Astrocyte of the cerebellum (primary cell): ENCODE measurements at regions of chr10 and their contacts with region 1.

Region 1: GRCh38 chr10:63206997-63207811 is 74.1 kb downstream of the NRBF2 start:
- DNase-seq: peak; percentile 83
- H3K4me3 ChIP-seq: no peak overlapping the region
- CTCF ChIP-seq: no peak

Region 2: DNA sequence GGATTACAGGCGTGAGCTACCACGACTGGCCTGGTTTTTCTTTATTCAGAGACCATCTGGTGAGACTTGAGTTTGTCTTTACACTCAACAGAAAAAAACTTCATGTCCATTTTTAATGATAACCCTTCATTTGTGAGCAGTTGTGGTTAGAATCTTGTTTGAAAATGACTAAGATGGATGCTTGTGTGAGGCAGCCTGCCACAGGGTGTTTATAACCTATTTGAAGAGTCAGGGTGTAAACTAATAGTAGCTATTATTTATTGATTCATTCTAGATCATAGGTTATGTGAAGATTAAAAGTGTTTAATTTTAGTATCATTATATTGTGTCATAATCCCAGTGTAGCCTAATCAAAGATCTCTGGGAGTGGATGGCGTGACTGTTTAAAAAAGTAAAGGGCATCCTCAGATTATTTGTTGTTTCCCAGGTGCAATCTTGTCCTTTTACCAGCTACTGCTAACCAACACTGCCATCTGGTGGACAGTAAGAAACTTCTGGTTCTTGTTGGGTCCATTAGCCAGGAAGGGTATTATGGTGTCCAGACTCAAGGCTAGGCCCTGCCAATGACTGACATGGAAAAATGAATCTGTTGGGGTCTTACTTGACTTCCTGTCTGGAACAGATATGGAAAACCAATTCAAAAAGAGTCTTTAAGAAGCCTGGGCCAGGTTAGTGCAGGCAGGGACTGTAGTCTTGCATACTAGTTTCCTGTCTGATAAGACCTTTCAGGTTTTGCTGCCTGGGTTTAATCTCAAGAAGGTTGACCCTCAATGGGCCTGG is 49.2 kb before region 1 on chr10:
- in situ Hi-C with region 1: no loop called
- DNase-seq: peak; percentile 91
- H3K4me3 ChIP-seq: no peak overlapping the region
- CTCF ChIP-seq: peak; percentile 77

Region 3: DNA sequence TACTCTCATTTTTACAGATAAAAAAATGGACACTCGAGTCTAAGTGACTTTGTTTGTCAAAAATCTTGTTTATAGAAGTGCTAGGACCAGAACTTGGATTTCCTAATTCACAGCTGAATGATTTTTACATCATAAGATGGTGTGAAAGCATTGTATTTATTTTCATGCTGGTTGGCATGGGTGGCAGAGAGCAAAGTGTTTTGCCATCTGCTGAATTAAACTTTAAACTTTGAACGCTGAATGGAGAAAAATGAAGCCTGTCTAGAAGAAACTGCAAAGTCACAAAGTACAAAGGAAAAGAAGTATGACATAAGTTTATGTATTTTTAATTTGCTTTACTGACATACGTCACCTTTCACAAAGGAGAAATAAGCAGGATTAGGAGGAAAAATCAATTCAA is 67.9 kb after region 1 on chr10:
- in situ Hi-C with region 1: loop called (anchors 5 kb)
- DNase-seq: no peak
- H3K4me3 ChIP-seq: no peak overlapping the region
- CTCF ChIP-seq: no peak

Region 4: DNA sequence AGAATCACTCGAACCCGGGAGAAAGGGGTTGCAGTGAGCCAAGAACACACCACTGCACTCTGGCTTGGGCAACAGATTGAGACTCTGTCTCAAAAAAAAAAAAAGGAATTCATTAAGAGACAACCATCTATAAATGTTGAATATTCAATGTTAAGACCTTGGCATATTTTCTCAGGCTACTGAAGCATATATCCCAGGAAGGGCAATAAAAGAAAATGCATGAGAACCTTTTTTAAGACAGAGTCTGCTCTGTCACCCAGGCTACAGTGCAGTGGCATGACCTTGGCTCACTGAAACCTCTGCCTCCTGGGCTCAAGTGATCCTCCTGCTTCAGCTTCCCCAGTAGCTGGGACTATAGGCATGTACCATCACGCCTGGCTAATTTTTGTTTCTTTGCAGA is 93.6 kb after region 1 on chr10:
- in situ Hi-C with region 1: no loop called
- DNase-seq: no peak
- H3K4me3 ChIP-seq: no peak overlapping the region
- CTCF ChIP-seq: no peak

Region 5: DNA sequence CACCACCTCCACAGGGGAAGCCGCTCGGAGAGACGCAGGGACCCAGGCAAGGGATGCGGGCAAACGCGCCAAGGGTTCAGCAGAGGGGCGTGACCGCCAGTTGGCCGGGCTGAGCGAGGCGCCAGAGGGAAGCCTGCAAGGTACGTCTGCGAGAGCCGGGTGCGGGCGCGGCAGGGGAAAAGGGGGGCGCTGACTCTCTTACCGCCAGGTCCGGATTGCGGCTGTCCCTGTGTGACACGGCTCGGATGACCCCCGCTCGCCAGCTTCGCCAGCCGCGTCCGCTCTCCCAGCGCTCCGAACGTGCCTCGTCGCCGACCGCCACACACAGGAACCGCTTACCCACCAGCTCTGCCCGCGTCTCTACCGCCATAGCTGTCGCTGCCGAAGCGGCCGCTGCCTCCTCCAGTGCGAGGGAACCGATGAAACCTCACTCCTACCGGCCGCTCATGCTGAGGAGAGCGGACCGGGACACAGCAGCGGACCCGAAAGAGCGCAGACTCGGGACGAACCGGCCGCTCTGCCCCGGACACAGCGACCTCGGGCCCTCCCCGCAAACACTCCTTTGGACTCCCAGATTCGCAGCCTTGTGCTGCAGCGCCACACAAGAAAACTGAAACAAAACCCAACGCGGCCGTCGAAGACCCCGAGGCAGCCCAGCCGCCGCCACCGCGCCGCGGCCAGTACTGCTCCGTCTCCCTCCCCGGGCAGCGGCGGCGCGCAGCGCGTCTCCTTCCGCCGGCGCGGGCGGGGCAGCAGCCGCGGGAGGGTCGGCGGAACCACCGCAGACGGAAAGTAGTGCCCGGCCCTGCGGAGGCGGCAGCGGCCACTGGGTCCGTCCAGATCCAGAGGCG is 258.3 kb after region 1 on chr10 and contains the start of gene JMJD1C:
- in situ Hi-C with region 1: no loop called
- DNase-seq: peak; percentile 70
- H3K4me3 ChIP-seq: peak within 1 kb of the TSS; percentile 83
- CTCF ChIP-seq: no peak

Region 6: DNA sequence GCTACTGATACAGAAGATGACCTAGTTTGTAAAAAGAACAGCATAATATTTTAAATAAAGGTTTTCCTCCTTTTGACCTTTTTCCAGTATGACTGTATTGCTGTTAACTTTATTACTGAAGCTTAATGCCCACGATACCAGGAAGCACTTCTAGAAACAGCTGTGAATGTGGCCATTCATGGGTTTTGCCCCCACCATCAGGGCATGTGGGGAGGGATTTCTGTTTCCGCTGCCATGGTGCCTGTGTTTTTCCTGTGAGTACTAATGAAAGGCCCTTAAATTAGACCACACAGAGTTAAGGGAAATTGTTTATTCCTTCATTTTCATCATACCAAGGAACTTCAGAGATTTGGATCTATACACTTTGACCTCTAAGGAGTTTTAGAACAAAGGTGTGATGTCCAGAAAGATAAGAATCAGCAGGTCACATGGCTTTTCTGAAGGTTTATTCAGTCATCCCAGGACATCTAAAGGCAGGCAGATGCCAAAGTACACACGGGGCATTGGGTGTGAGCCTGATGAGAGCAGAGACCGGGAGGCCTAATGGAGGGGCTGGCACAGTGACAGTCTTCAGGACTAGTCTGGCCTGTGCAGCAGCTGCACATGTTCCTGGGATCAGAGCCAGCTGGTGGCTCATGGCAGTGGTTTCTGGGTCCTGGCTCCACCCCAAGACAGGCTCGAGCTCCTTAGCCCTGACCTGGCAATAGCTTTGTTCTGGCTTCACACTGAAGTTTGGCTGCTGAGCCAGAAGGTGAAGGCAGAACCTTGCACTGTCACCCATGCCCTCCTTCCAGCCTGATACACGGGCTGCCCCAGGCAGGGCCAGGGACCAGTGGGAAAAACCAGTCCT is 504.9 kb after region 1 on chr10:
- in situ Hi-C with region 1: loop called (anchors 5 kb)
- DNase-seq: peak; percentile 94
- H3K4me3 ChIP-seq: no peak overlapping the region
- CTCF ChIP-seq: no peak

Region 7: GRCh38 chr10:63765126-63765525 is 557.9 kb after region 1 on chr10:
- in situ Hi-C with region 1: no loop called
- DNase-seq: no peak
- H3K4me3 ChIP-seq: no peak overlapping the region
- CTCF ChIP-seq: no peak